PC-3 (cell line): ENCODE measurements at regions of chr3 and their contacts with region 1.

Region 1: DNA sequence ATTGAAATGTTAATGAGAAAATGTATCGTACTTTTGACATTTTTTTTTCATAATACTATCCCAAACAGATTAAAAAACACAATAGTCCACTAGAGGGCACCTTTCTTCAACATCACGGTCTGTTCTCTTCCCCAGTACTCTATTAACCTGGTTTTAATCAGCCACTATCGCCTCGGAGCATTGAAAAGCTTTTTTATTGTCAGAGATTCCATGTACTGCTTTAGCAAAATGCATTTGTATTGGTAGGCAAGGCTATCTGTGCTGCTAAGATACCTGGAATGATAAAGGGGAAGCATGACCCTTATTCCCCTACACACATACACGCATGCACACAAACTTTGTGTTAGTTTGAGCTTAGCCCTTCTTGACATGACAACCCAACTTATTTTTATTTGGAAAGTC is 160.1 kb upstream of the IL12A start:
- DNase-seq: peak; percentile 69
- ATAC-seq: peak; percentile 24; the same call in 1 of the 2 replicates
- H3K4me3 ChIP-seq: no peak overlapping the region
- H3K27ac ChIP-seq: no peak overlapping the region
- H3K4me1 ChIP-seq: peaks cover 39% of the 10 kb centered on the region
- H3K27me3 ChIP-seq: no peaks in the 10 kb centered on the region
- CTCF ChIP-seq: peak; percentile 77

Region 2: DNA sequence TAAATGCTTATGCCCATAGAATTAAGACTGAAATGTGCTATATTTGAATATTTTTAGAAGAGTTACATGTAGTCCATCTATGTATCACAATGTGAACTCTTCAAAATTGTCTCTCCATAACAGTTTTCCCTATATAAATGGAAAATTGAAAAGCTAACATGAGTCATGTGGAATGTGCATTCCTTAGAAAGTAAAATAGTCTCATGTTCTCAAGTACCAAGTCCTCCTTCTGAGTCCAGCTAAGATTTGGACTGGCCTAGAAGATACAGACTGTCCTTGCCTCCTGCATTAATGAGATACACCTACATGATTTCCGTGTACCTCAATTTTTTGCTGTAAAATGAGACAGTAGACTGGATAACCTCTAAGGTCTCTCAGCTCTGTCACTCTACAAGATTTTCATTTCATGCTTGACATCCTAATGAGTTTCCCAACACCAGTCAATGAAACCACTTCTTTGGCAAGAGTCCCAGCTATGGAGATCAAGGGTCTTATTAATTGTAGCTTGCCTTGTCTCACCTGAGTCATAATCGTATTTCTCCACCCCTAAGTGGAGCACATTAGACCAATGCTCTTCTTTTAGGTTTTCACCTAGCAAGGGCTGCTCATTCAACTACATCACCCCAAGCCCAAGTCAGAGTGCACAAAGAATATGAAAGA is 190.5 kb before region 1 on chr3:
- CTCF ChIA-PET with region 1: no interaction called
- POLR2A ChIA-PET with region 1: no interaction called
- intact Hi-C with region 1: loop called (anchors 5 kb)
- DNase-seq: peak; percentile 86
- ATAC-seq: peak; percentile 79
- H3K4me3 ChIP-seq: peak overlapping the region; percentile 5; the same call in 1 of the 2 replicates
- H3K27ac ChIP-seq: peak overlapping the region; percentile 7
- H3K4me1 ChIP-seq: peaks cover 49% of the 10 kb centered on the region
- H3K27me3 ChIP-seq: no peaks in the 10 kb centered on the region
- CTCF ChIP-seq: no peak

Region 3: DNA sequence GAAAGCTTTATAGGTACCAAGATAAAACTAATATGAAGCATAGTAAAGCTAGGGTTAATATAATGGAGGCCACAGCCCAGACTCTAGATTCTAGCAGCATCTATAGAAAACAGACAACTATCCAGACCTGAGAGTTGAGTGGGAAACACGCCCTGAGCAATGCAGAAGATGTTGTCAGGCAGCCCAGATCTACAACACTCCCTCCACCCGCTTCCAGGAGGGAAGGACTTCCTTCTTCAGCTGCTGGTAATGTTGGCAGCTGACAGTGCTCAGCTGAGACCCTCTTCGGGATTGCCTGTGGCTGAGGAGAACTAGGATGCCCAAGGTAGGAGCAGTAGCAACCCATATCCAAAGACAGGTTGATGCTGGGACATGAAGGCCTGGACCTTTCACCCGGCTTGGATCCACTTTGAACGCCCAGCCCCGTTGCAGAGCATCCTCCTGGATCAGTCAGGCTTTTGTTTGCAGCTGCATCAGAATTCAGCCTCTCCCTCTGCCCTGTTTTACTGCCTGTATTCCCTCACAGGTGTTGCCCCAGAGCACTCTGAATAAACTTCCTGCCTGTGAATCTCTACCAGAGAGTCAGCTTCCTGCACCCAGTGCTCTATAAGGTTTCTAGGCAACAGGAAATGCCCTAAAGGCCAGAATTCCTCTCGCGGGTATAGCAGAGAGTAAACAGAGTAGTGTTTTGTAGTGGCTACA is 14.6 kb before region 1 on chr3:
- CTCF ChIA-PET with region 1: no interaction called
- POLR2A ChIA-PET with region 1: no interaction called
- intact Hi-C with region 1: loop called (anchors 1 kb)
- DNase-seq: peak; percentile 96
- ATAC-seq: peak; percentile 99
- H3K4me3 ChIP-seq: peak overlapping the region; percentile 41
- H3K27ac ChIP-seq: peak overlapping the region; percentile 71
- H3K4me1 ChIP-seq: peaks cover 45% of the 10 kb centered on the region
- H3K27me3 ChIP-seq: no peaks in the 10 kb centered on the region
- CTCF ChIP-seq: no peak

Region 4: DNA sequence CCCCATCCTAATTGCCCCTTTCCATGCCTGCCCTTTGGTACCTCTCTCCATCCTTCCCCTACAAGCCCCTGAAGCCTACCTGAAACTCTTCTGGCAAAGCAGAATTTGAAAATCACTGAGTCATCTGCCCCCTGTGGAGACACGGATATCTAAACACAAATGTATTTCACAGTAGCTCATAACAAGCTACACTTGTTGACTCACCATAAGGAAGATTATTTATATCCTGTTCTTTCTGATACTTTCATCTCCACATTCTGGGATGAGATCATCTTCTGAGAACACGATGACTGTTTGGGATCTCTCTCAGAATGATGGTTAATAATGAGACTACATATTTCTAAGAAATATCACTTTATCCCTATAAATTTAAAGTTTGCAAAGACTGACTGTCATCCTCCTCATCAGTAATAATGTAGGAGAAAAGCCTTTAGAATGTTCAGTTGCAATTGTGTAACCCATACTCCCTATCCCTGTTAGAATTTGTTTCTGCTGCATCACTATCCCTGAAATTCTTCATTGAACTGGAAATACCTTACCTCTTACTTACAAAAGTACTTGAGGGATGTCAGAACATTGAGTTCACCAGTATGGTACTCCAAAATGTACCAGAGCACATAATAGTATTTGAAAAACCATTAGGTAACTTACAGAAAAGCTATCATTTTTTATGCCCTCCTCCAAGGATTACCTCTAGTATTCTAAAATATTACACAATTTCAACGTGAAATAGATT is 44.0 kb after region 1 on chr3:
- CTCF ChIA-PET with region 1: interaction called, 3 read pairs
- POLR2A ChIA-PET with region 1: no interaction called
- intact Hi-C with region 1: loop called (anchors 2 kb)
- DNase-seq: peak; percentile 92
- ATAC-seq: peak; percentile 95
- H3K4me3 ChIP-seq: no peak overlapping the region
- H3K27ac ChIP-seq: peak overlapping the region; percentile 61
- H3K4me1 ChIP-seq: peaks cover 30% of the 10 kb centered on the region
- H3K27me3 ChIP-seq: no peaks in the 10 kb centered on the region
- CTCF ChIP-seq: peak; percentile 50

Region 5: DNA sequence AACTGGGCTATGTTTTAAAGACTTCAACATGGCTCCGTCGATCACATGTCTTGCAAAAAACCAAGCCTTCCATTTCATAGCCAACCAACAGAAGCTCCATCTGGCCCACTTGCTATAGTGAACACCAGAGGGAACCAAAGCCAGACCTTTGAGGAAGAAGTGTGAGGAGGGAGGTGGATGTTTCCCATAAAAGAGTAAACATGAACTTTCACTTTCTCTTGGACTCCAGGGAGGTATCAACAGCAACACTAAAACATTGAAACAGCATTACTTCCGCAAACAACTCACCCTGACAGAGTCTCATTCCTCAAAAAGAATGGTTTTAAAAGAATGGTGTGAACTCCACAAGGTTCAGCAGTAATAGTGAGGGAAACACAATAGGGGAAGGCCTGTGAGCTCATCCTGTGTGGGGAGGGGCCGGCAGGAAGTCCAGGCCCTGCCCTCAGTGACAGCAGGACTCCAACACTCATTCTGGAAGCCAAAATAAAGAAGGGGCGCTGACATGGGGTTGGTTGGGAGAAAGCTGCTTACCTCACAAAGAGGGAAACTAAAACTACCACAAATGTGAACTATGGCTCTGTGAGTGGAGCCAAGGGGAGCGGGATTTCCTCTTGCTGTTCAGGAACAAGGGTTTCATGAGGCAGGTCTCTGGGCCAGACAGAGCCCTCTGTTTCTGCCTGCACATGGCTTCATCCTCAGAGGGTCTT is 101.0 kb after region 1 on chr3:
- CTCF ChIA-PET with region 1: no interaction called
- POLR2A ChIA-PET with region 1: no interaction called
- intact Hi-C with region 1: loop called (anchors 2 kb)
- DNase-seq: peak; percentile 81
- ATAC-seq: peak; percentile 46
- H3K4me3 ChIP-seq: peak overlapping the region; percentile 6; the same call in 1 of the 2 replicates
- H3K27ac ChIP-seq: peak overlapping the region; percentile 88
- H3K4me1 ChIP-seq: peaks cover 32% of the 10 kb centered on the region
- H3K27me3 ChIP-seq: no peaks in the 10 kb centered on the region
- CTCF ChIP-seq: peak; percentile 70

Region 6: GRCh38 chr3:159988617-159989271 is 160.2 kb after region 1 on chr3 and contains the start of gene IL12A:
- CTCF ChIA-PET with region 1: interaction called, 3 read pairs
- POLR2A ChIA-PET with region 1: no interaction called
- intact Hi-C with region 1: loop called (anchors 5 kb)
- DNase-seq: peak; percentile 88
- ATAC-seq: peak; percentile 86
- H3K4me3 ChIP-seq: peak within 1 kb of the TSS; percentile 82
- H3K27ac ChIP-seq: peak within 1 kb of the TSS; percentile 25
- H3K4me1 ChIP-seq: peaks cover 17% of the 10 kb centered on the region
- H3K27me3 ChIP-seq: no peaks in the 10 kb centered on the region
- CTCF ChIP-seq: peak; percentile 98
- total RNA-seq, gene IL12A: 6.5 and 8.3 TPM in 2 replicates

Region 7: DNA sequence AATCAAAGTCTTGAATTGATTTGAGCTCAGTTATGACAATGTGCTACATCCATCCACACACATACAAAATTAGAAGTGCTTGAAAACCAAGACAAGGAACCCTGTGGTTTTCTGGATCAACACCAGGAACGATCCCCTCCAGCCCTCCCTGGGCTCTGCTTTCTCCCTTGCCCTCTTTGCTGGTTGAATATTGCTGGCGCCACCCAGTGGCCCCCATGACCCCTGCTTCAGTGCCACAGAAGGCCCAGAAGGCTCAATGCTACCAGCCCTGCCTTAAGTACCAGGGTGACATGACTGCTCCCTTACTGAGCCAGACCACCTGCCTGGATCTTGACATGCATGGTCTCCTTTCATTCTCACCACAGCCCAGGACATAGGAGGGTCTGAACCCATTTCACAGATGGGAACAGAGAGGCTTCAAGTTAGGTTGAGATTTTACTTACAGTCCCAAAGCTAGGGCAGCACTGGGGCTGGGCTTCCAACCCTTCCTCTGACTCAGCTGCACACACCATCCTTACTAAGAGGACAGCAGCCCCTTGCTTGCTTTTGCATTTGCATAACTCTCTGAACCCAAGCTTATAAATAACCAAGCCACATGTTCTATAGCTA is 175.1 kb after region 1 on chr3:
- CTCF ChIA-PET with region 1: interaction called, 5 read pairs
- POLR2A ChIA-PET with region 1: no interaction called
- intact Hi-C with region 1: loop called (anchors 1 kb)
- DNase-seq: peak; percentile 78
- ATAC-seq: peak; percentile 82
- H3K4me3 ChIP-seq: no peak overlapping the region
- H3K27ac ChIP-seq: no peak overlapping the region
- H3K4me1 ChIP-seq: no peaks in the 10 kb centered on the region
- H3K27me3 ChIP-seq: no peaks in the 10 kb centered on the region
- CTCF ChIP-seq: peak; percentile 87

Region 8: GRCh38 chr3:160368804-160369203 is 540.3 kb after region 1 on chr3:
- CTCF ChIA-PET with region 1: no interaction called
- POLR2A ChIA-PET with region 1: no interaction called
- intact Hi-C with region 1: no loop called
- DNase-seq: peak; percentile 9
- ATAC-seq: peak; percentile 63
- H3K4me3 ChIP-seq: no peak overlapping the region
- H3K27ac ChIP-seq: no peak overlapping the region
- H3K4me1 ChIP-seq: peaks cover 15% of the 10 kb centered on the region
- H3K27me3 ChIP-seq: no peaks in the 10 kb centered on the region
- CTCF ChIP-seq: no peak